GM12878 (cell line): ENCODE measurements at regions of chr2 and their contacts with region 1.

Region 1: DNA sequence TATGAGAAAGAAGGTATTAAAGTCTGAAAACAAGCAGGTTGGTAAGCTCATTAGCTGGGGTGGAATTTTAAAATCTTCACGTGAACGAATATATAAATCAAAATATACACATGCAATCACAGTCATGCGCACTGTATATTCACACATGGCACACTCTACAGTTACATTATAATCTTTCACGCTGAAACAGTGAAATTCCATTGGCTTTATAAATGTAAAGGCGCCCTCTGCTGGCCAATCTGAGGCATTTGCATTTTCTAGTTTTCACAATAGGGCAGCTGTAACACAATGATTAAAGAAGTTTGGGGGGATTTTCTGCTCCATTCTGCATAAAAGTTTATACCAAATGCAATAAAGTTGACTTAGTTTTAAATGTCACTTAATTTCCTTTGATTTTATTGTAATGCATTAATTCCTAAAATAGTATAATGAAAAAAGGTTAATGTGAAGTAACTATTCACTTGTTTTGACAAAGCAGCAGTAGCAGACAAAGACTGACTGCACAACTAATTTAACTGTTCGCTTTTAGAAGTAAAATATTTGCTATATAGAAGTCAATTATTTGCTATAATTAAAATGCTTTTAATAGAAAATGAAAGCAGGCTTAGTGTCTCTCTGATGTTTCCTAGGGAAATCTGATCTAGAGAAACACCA is 17.2 kb downstream of the IFIH1 start:
- DNase-seq: no peak
- ATAC-seq: peak; percentile 84
- H3K4me3 ChIP-seq: no peak overlapping the region
- H3K27ac ChIP-seq: no peak overlapping the region
- H3K4me1 ChIP-seq: no peaks in the 10 kb centered on the region
- H3K27me3 ChIP-seq: no peaks in the 10 kb centered on the region
- CTCF ChIP-seq: peak; percentile 57 to 83 (median 79)
- EP300 ChIP-seq: no peak
- POLR2A ChIP-seq: no peak
- RAD21 ChIP-seq: peak; percentile 59

Region 2: GRCh38 chr2:161044095-161044865 is 1257.0 kb before region 1 on chr2:
- CTCF ChIA-PET with region 1: no interaction called
- POLR2A ChIA-PET with region 1: no interaction called
- RAD21 ChIA-PET with region 1: no interaction called
- SMC1A ChIA-PET with region 1: no interaction called
- in situ Hi-C with region 1: no loop called
- intact Hi-C with region 1: no loop called
- DNase-seq: no peak
- ATAC-seq: no peak
- H3K4me3 ChIP-seq: no peak overlapping the region
- H3K27ac ChIP-seq: no peak overlapping the region
- H3K4me1 ChIP-seq: no peaks in the 10 kb centered on the region
- H3K27me3 ChIP-seq: peaks cover 0 to 4% of the 10 kb centered on the region in 2 experiments; a peak in 2 of 4 replicates
- CTCF ChIP-seq: no peak
- EP300 ChIP-seq: no peak
- POLR2A ChIP-seq: no peak
- RAD21 ChIP-seq: no peak

Region 3: GRCh38 chr2:162221064-162221463 is 80.2 kb before region 1 on chr2:
- CTCF ChIA-PET with region 1: interaction called, 228 read pairs
- POLR2A ChIA-PET with region 1: no interaction called
- RAD21 ChIA-PET with region 1: interaction called, 79 read pairs
- SMC1A ChIA-PET with region 1: interaction called, 81 read pairs
- in situ Hi-C with region 1: loop called (anchors 5 kb)
- intact Hi-C with region 1: loop called (anchors 1 kb)
- DNase-seq: no peak
- ATAC-seq: peak; percentile 98
- H3K4me3 ChIP-seq: no peak overlapping the region
- H3K27ac ChIP-seq: no peak overlapping the region
- H3K4me1 ChIP-seq: no peaks in the 10 kb centered on the region
- H3K27me3 ChIP-seq: no peaks in the 10 kb centered on the region
- CTCF ChIP-seq: peak; percentile 92 to 97 (median 95)
- EP300 ChIP-seq: no peak
- POLR2A ChIP-seq: no peak
- RAD21 ChIP-seq: peak; percentile 78

Region 4: GRCh38 chr2:162233197-162233596 is 68.1 kb before region 1 on chr2:
- CTCF ChIA-PET with region 1: interaction called, 13 read pairs
- POLR2A ChIA-PET with region 1: no interaction called
- RAD21 ChIA-PET with region 1: interaction called, 3 read pairs
- SMC1A ChIA-PET with region 1: interaction called, 3 read pairs
- in situ Hi-C with region 1: no loop called
- intact Hi-C with region 1: no loop called
- DNase-seq: no peak
- ATAC-seq: no peak
- H3K4me3 ChIP-seq: no peak overlapping the region
- H3K27ac ChIP-seq: no peak overlapping the region
- H3K4me1 ChIP-seq: no peaks in the 10 kb centered on the region
- H3K27me3 ChIP-seq: no peaks in the 10 kb centered on the region
- CTCF ChIP-seq: no peak
- EP300 ChIP-seq: no peak
- POLR2A ChIP-seq: no peak
- RAD21 ChIP-seq: no peak

Region 5: GRCh38 chr2:162282765-162283425 is 18.4 kb before region 1 on chr2:
- CTCF ChIA-PET with region 1: interaction called, 316 read pairs
- POLR2A ChIA-PET with region 1: interaction called, 3 read pairs
- RAD21 ChIA-PET with region 1: interaction called, 9 read pairs
- SMC1A ChIA-PET with region 1: interaction called, 13 read pairs
- in situ Hi-C with region 1: no loop called
- intact Hi-C with region 1: no loop called
- DNase-seq: no peak
- ATAC-seq: no peak
- H3K4me3 ChIP-seq: no peak overlapping the region
- H3K27ac ChIP-seq: no peak overlapping the region
- H3K4me1 ChIP-seq: no peaks in the 10 kb centered on the region
- H3K27me3 ChIP-seq: no peaks in the 10 kb centered on the region
- CTCF ChIP-seq: no peak
- EP300 ChIP-seq: no peak
- POLR2A ChIP-seq: no peak
- RAD21 ChIP-seq: no peak

Region 6: DNA sequence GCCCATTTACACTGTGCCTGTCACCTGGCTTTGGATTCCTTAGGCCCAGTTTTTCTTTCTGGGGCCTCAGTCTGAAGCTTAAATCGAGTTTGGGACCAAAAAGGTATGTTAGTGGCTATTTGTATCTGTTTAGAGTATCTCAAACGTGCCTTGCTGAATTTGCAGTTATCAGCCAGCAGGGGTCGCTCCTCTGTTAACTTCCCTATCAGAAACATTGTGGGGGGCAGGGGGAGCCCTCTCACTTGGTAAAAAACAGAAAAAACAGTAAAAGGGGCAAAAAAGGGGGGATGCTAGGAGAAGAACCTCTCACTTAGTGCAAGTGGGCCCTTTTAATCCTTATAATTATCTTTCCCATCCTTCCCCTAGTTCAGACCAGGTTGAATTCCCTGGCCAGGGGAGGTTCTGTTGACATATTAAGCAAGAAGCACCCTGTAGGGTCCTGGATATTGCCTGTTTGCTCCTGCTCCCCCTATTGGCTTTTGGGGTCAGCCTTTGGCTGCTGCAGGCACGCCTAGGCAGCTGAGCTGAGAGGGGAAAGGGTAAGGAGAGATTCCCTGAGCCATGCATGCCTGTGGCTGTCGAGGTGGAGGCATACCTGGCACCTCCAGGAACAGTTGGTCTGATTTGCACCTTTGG is 26.0 kb after region 1 on chr2:
- CTCF ChIA-PET with region 1: interaction called, 194 read pairs
- POLR2A ChIA-PET with region 1: interaction called, 4 read pairs
- RAD21 ChIA-PET with region 1: interaction called, 34 read pairs
- SMC1A ChIA-PET with region 1: interaction called, 84 read pairs
- in situ Hi-C with region 1: no loop called
- intact Hi-C with region 1: no loop called
- DNase-seq: no peak
- ATAC-seq: peak; percentile 40
- H3K4me3 ChIP-seq: no peak overlapping the region
- H3K27ac ChIP-seq: no peak overlapping the region
- H3K4me1 ChIP-seq: no peaks in the 10 kb centered on the region
- H3K27me3 ChIP-seq: no peaks in the 10 kb centered on the region
- CTCF ChIP-seq: peak; percentile 30 to 64 (median 48)
- EP300 ChIP-seq: no peak
- POLR2A ChIP-seq: no peak
- RAD21 ChIP-seq: 0 out of 2 replicates have a peak, but pooled peaks have one; percentile 13

Region 7: GRCh38 chr2:162403884-162404283 is 102.6 kb after region 1 on chr2:
- CTCF ChIA-PET with region 1: no interaction called
- POLR2A ChIA-PET with region 1: no interaction called
- RAD21 ChIA-PET with region 1: no interaction called
- SMC1A ChIA-PET with region 1: no interaction called
- in situ Hi-C with region 1: no loop called
- intact Hi-C with region 1: no loop called
- DNase-seq: no peak
- ATAC-seq: no peak
- H3K4me3 ChIP-seq: no peak overlapping the region
- H3K27ac ChIP-seq: no peak overlapping the region
- H3K4me1 ChIP-seq: no peaks in the 10 kb centered on the region
- H3K27me3 ChIP-seq: no peaks in the 10 kb centered on the region; a peak in 1 of 4 replicates
- CTCF ChIP-seq: no peak
- EP300 ChIP-seq: no peak
- POLR2A ChIP-seq: no peak
- RAD21 ChIP-seq: no peak